Right ventricle myocardium inferior (tissue), 1 donor: ENCODE measurements at regions of chr3 and their contacts with region 1.

Region 1: GRCh38 chr3:20668411-20668810 is 482.4 kb upstream of the SGO1 start:
- DNase-seq: no peak
- ATAC-seq: no peak

Region 2: DNA sequence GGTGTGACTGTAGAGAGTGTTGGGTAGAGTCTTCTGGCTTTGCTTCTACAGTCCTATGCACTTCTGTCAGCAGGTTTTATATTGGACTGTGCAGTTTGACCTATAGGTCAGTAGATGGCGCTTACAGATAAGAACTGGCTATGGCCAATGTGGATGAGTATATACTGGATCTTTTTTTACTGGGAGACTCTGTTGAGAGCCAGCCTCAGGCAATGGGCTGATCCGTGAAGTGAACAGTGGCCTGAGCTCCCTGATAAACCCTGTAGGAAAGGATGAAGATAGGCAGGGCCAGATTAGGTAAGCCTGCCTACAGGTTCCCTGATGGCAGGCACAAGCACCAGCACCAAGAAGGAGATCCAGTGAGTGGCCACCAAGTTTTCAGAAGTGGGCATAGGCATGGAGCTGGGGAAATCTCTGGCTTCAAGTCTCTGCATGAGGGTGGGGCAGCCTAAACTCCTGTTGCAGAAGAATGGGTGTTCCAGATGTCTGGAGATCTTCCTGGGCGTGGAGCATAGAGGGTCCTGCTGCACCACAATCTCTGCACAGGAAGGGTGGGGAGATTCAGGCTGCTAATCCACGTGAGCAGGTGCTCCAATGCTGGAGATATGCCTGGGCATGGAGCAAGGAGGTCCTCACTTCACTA is 156.4 kb before region 1 on chr3:
- intact Hi-C with region 1: no loop called
- DNase-seq: no peak
- ATAC-seq: peak; percentile 62

Region 3: DNA sequence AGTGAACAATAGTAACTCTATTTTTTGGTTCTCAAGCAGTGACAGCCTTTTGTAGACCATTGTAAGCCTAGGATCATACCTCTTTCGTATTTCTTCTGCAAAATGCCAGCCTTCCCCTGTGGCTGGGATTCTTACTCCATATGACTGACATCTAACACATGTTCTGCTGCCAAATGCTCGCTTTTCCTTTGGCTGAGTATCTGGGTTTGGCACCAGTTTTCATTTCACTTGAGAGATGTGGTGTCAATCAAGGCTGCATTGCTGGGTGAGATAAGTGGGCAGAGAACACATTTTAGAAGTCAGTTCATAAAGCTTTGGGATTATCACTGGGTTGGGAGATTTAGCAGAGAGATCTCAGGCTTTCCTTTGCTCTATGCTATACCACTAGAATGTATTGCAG is 32.3 kb after region 1 on chr3:
- intact Hi-C with region 1: loop called (anchors 5 kb)
- DNase-seq: no peak
- ATAC-seq: peak; percentile 72

Region 4: GRCh38 chr3:20811631-20812030 is 143.2 kb after region 1 on chr3:
- intact Hi-C with region 1: no loop called
- DNase-seq: no peak
- ATAC-seq: no peak